Activated CD4-positive, alpha-beta T cell treated with anti-CD3 and anti-CD28 coated beads for 36 hours (primary cell): ENCODE measurements at regions of chr3 and their contacts with region 1.

Region 1: GRCh38 chr3:33392703-33393125 is 47.5 kb downstream of the UBP1 start:
- DNase-seq: no peak
- ATAC-seq: no peak
- H3K4me3 Mint-ChIP-seq: no peak overlapping the region
- H3K27ac Mint-ChIP-seq: no peak overlapping the region
- H3K4me1 Mint-ChIP-seq: peaks cover 17% of the 10 kb centered on the region
- H3K27me3 Mint-ChIP-seq: no peaks in the 10 kb centered on the region

Region 2: GRCh38 chr3:33426068-33426467 is 33.4 kb after region 1 on chr3:
- CTCF ChIA-PET with region 1: no interaction called
- POLR2A ChIA-PET with region 1: no interaction called
- intact Hi-C with region 1: loop called in 1 of 2 experiments (anchors 5 kb)
- DNase-seq: no peak
- ATAC-seq: no peak
- H3K4me3 Mint-ChIP-seq: no peak overlapping the region
- H3K27ac Mint-ChIP-seq: no peak overlapping the region
- H3K4me1 Mint-ChIP-seq: peaks cover 45% of the 10 kb centered on the region
- H3K27me3 Mint-ChIP-seq: no peaks in the 10 kb centered on the region

Region 3: GRCh38 chr3:33629219-33629618 is 236.5 kb after region 1 on chr3:
- CTCF ChIA-PET with region 1: no interaction called
- POLR2A ChIA-PET with region 1: interaction called, 11 read pairs
- intact Hi-C with region 1: no loop called
- DNase-seq: no peak
- ATAC-seq: no peak
- H3K4me3 Mint-ChIP-seq: no peak overlapping the region
- H3K27ac Mint-ChIP-seq: no peak overlapping the region
- H3K4me1 Mint-ChIP-seq: no peaks in the 10 kb centered on the region
- H3K27me3 Mint-ChIP-seq: no peaks in the 10 kb centered on the region